A549 (cell line): ENCODE measurements at regions of chr20 and their contacts with region 1.

Region 1: GRCh38 chr20:2523919-2524708 is 12.3 kb upstream of the TMC2 start:
- DNase-seq: peak; percentile 78 to 87
- ATAC-seq: peak; percentile 80 to 86
- H3K4me3 ChIP-seq: peak overlapping the region; percentile 81
- H3K27ac ChIP-seq: peak overlapping the region; percentile 91 to 96
- H3K4me1 ChIP-seq: peaks cover 8% of the 10 kb centered on the region; the same call in 1 of the 3 replicates
- CTCF ChIP-seq: peak; percentile 96
- EP300 ChIP-seq: no peak
- POLR2A ChIP-seq: no peak; the same call in 1 of the 2 replicates
- RAD21 ChIP-seq: peak; percentile 51 to 68

Region 2: GRCh38 chr20:2470423-2471193 is 53.5 kb before region 1 on chr20 and contains the start of gene SNRPB:
- CTCF ChIA-PET with region 1: interaction called, 51 read pairs
- POLR2A ChIA-PET with region 1: interaction called, 28 read pairs
- DNase-seq: peak; percentile 99 to 100
- ATAC-seq: peak; percentile 97 to 98
- H3K4me3 ChIP-seq: peak within 1 kb of the TSS; percentile 67
- H3K27ac ChIP-seq: peak within 1 kb of the TSS; percentile 92 to 93
- H3K4me1 ChIP-seq: peaks cover 25% of the 10 kb centered on the region
- CTCF ChIP-seq: no peak
- EP300 ChIP-seq: no peak
- POLR2A ChIP-seq: peak; percentile 91
- RAD21 ChIP-seq: no peak
- polyA plus RNA-seq, gene SNRPB: 486 and 557 TPM in 2 replicates

Region 3: DNA sequence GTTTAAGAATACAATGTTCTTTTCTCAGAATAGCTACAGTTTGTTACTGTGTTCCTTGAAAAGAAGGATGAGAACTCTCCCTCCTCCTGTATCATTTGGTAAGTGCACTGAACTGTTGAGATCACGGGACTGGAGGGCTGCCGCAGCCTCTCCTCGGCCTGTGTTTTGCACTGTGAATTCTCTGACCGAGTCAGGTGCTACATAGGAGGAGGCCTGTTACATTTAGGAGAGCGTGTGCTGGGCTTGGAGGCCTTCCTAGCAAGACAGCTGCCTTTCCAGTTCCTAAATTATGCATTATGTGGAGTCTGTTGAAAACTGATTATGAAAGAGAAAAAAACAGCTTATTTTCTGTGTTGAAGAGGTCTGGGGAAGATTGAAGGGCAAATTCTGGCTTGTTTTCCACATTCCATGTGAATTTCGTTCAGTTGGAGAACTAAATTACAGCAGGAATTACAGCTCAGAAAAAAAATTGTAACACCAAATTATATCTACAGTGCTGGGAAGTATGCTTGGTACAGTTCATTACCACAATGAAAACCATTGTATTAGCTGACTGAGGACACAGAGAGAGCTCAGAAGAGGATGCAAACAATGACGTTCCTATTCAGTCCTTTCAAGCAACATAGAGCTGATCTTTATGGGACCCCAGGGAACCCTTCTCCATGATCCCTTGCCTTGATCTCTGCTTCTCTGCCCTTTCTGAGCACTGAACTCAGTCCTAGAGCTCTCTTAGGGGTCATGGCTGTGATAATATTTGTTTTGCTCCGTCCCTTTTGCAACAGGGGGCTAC is 15.0 kb after region 1 on chr20:
- CTCF ChIA-PET with region 1: interaction called, 17 read pairs
- POLR2A ChIA-PET with region 1: no interaction called
- DNase-seq: no peak
- ATAC-seq: no peak
- H3K4me3 ChIP-seq: no peak overlapping the region
- H3K27ac ChIP-seq: no peak overlapping the region
- H3K4me1 ChIP-seq: no peaks in the 10 kb centered on the region
- CTCF ChIP-seq: no peak
- EP300 ChIP-seq: no peak
- POLR2A ChIP-seq: no peak
- RAD21 ChIP-seq: no peak

Region 4: GRCh38 chr20:2558581-2559278 is 34.6 kb after region 1 on chr20:
- CTCF ChIA-PET with region 1: interaction called, 10 read pairs
- POLR2A ChIA-PET with region 1: no interaction called
- DNase-seq: peak in 1 of 2 experiments; percentile 21
- ATAC-seq: peak; percentile 37 to 41; a peak in 3 of 6 replicates
- H3K4me3 ChIP-seq: peak overlapping the region; percentile 18; the same call in 1 of the 3 replicates
- H3K27ac ChIP-seq: no peak overlapping the region
- H3K4me1 ChIP-seq: no peaks in the 10 kb centered on the region
- CTCF ChIP-seq: no peak
- EP300 ChIP-seq: no peak
- POLR2A ChIP-seq: no peak
- RAD21 ChIP-seq: no peak

Region 5: DNA sequence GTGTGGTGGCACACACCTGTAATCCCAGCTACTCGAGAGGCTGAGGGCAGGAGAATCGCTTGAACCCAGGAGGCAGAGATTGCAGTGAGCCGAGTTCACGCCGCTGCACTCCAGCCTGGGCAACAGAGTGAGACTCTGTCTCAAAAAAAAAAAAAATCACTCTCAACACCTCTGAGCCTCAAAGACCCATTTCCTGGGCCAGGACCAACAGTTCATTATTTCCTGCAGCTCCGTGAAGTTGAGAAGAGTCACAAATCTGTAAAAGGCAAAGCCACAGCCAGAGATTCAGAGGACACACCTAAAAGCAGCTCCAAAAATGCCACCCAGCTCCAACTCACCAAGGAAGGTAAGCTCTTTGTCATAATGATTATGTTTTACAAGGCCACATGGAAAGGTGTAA is 113.1 kb after region 1 on chr20:
- CTCF ChIA-PET with region 1: interaction called, 62 read pairs
- POLR2A ChIA-PET with region 1: no interaction called
- DNase-seq: no peak
- ATAC-seq: no peak
- H3K4me3 ChIP-seq: no peak overlapping the region
- H3K27ac ChIP-seq: no peak overlapping the region
- H3K4me1 ChIP-seq: peaks cover 6% of the 10 kb centered on the region; the same call in 2 of the 3 replicates
- CTCF ChIP-seq: no peak
- EP300 ChIP-seq: no peak
- POLR2A ChIP-seq: no peak
- RAD21 ChIP-seq: no peak

Region 6: DNA sequence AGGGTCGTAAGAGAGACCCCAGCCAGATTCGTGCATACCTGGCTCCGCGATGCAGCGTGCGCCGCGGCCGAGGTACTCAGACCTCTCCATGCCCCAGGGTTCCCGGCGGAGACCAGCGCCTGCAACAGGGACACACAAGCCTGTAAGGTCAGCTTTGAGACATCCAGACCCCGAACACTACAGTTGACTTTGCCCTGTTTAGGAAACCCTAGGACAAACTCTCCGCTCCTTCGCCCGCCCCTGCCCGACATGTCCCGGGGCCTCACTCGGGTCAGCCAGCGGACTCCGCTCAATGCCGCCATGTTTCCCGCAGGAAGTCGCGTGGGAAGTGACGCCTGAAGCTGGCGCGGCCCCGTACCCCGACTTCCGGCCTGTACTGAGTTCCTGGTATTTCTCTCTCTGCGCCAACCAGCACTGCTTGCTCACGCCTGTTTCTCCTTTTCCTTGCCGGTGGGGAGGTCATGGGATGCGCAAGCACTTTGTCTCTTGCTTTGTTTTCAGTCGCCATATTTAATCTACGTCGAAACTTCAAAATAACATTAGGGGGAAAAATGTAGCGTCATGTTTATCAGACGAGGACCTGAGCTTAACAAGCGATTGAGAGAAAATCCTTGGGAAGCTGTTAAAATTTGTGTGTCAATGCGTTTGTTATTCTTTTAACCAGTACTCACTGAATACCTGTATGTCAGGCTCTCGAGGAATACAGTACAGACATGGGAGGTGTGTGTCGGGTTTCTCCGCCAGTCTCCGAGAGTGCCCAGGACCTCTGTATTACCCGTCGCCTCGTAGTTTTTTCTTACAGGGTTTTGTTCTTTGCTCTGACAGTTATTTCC is 140.0 kb after region 1 on chr20 and contains the start of gene IDH3B:
- CTCF ChIA-PET with region 1: interaction called, 11 read pairs
- POLR2A ChIA-PET with region 1: no interaction called
- DNase-seq: peak; percentile 95 to 96
- ATAC-seq: peak; percentile 84 to 90
- H3K4me3 ChIP-seq: peak within 1 kb of the TSS; percentile 94
- H3K27ac ChIP-seq: peak within 1 kb of the TSS; percentile 84 to 85
- H3K4me1 ChIP-seq: peaks cover 11% of the 10 kb centered on the region; the same call in 2 of the 3 replicates
- CTCF ChIP-seq: no peak
- EP300 ChIP-seq: no peak
- POLR2A ChIP-seq: peak; percentile 89
- RAD21 ChIP-seq: no peak
- polyA plus RNA-seq, gene IDH3B: 188 and 200 TPM in 2 replicates